ENCODE measurements at regions of chr1 and their contacts with region 1.

Region 1: GRCh38 chr1:41751804-41752513 is 166.8 kb downstream of the HIVEP3 start:
- DNase-seq: no peak
- ATAC-seq: peak; percentile 29
- H3K4me3 Mint-ChIP-seq: peak overlapping the region; percentile 68
- H3K27ac Mint-ChIP-seq: peak overlapping the region; percentile 89
- H3K4me1 Mint-ChIP-seq: peaks cover 65% of the 10 kb centered on the region
- H3K27me3 Mint-ChIP-seq: no peaks in the 10 kb centered on the region
- CTCF ChIP-seq: no peak

Region 2: GRCh38 chr1:41573785-41574713 is 177.9 kb before region 1 on chr1:
- CTCF ChIA-PET with region 1: interaction called, 3 read pairs
- POLR2A ChIA-PET with region 1: no interaction called
- intact Hi-C with region 1: loop called (anchors 2 kb)
- DNase-seq: peak; percentile 63
- ATAC-seq: peak; percentile 96
- H3K4me3 Mint-ChIP-seq: no peak overlapping the region
- H3K27ac Mint-ChIP-seq: no peak overlapping the region
- H3K4me1 Mint-ChIP-seq: peaks cover 23% of the 10 kb centered on the region
- H3K27me3 Mint-ChIP-seq: no peaks in the 10 kb centered on the region
- CTCF ChIP-seq: peak; percentile 70

Region 3: GRCh38 chr1:41662061-41662764 is 89.7 kb before region 1 on chr1:
- CTCF ChIA-PET with region 1: no interaction called
- POLR2A ChIA-PET with region 1: interaction called, 12 read pairs
- intact Hi-C with region 1: loop called (anchors 1 kb)
- DNase-seq: peak; percentile 73
- ATAC-seq: peak; percentile 78
- H3K4me3 Mint-ChIP-seq: peak overlapping the region; percentile 74
- H3K27ac Mint-ChIP-seq: no peak overlapping the region
- H3K4me1 Mint-ChIP-seq: peaks cover 78% of the 10 kb centered on the region
- H3K27me3 Mint-ChIP-seq: no peaks in the 10 kb centered on the region
- CTCF ChIP-seq: no peak

Region 4: DNA sequence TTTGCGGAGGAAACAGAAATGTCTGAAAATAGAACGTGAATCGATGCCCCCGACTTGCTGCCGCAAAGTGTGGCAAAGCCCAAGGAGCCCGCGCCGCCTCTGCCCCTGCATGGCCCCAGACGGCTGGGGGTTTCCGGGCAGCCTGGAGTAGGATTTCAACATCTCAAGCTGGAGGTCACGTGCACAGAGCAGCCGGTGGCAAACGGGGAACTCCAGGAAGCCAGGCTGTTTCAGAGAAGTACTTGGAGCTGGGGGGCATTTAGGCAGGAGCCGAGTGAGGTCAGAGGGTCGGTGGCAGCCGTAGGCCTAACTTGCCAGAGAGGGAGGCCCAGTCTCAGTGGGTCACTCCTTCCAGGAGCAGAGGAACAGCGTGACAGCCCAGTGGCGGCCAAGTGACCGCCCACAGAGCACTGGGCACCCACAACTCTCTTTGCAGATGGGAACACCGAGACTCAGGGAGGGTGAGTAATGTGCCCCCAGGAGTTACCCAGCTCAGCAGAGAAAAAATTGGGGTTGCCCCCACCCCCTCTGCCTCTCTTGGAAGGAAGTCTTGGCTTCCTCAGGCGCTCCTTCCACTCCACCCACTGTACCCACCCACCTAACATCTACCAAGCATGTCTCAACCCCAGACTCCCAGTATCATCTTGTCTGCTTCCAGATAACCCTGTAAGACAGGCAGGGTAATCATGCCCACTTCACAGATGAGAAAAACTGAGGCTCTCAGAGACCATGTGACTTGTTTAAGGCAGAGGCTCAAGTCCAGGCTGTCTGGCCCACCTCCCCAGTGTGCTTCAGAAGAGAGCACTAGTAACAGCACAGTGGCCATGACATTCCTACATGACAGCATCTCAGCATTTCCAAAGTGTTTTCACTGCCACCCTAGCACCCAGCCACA is 12.7 kb before region 1 on chr1:
- CTCF ChIA-PET with region 1: interaction called, 3 read pairs
- POLR2A ChIA-PET with region 1: interaction called, 33 read pairs
- intact Hi-C with region 1: loop called (anchors 1 kb)
- DNase-seq: peak; percentile 68
- ATAC-seq: peak; percentile 83
- H3K4me3 Mint-ChIP-seq: peak overlapping the region; percentile 77
- H3K27ac Mint-ChIP-seq: peak overlapping the region; percentile 90
- H3K4me1 Mint-ChIP-seq: peaks cover 84% of the 10 kb centered on the region
- H3K27me3 Mint-ChIP-seq: no peaks in the 10 kb centered on the region
- CTCF ChIP-seq: no peak

Region 5: DNA sequence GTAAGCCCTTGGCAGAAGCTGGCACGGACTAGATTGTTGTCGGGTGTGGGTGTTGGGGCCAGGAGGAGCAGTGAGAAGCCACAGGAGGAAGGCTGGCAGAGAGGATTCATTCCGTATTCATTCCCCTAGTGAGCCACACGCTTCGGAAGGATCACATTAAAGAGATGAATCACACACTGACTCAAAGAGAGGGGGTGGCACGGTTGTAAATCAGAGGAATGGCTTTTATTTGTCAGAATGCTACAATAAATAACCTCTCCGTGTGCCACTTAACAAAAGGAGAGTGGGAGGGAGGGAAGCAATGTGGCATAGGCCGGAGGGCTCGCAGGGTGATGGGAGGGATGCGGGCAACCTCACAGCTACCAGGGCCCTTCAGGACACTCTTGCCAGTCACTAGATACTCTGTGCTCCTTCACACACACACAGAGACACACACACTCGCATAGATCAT is 31.3 kb after region 1 on chr1:
- CTCF ChIA-PET with region 1: no interaction called
- POLR2A ChIA-PET with region 1: no interaction called
- intact Hi-C with region 1: no loop called
- DNase-seq: no peak
- ATAC-seq: no peak
- H3K4me3 Mint-ChIP-seq: no peak overlapping the region
- H3K27ac Mint-ChIP-seq: no peak overlapping the region
- H3K4me1 Mint-ChIP-seq: peaks cover 7% of the 10 kb centered on the region
- H3K27me3 Mint-ChIP-seq: no peaks in the 10 kb centered on the region
- CTCF ChIP-seq: no peak

Region 6: DNA sequence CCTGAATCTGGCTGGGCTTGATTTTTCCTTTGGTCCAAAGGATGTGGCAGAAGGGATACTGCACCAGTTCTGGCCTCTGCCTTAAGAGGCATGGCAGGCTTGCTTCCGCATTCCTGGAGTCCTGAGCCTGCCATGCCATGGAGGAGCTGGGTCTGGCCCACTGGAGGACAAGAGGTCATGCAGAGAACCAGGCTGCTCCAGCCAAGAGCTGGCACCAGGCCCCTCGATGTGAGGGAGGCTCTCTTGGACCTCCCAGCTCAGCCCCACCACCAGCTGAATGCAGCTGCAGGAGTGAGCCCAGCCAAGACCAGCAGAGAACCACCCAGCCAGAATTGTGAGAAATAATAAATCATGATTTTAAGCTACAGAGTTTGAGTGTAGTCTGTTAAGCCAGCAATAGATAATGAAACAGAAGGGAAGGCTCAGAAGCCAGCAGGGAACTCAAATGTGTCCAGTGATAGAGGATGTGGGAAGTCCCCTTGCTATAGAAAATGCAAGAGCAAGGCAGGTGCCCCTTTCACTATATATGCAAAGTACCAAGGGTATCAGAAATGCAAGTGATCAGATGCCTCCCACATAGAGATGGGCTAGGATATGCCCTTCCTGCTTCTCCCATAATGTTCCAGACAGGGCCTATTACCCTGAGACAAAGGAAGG is 48.4 kb after region 1 on chr1:
- CTCF ChIA-PET with region 1: no interaction called
- POLR2A ChIA-PET with region 1: interaction called, 10 read pairs
- intact Hi-C with region 1: no loop called
- DNase-seq: no peak
- ATAC-seq: peak; percentile 73
- H3K4me3 Mint-ChIP-seq: peak overlapping the region; percentile 39
- H3K27ac Mint-ChIP-seq: no peak overlapping the region
- H3K4me1 Mint-ChIP-seq: peaks cover 60% of the 10 kb centered on the region
- H3K27me3 Mint-ChIP-seq: no peaks in the 10 kb centered on the region
- CTCF ChIP-seq: no peak

Region 7: GRCh38 chr1:41868599-41868998 is 116.6 kb after region 1 on chr1:
- CTCF ChIA-PET with region 1: no interaction called
- POLR2A ChIA-PET with region 1: no interaction called
- intact Hi-C with region 1: loop called (anchors 2 kb)
- DNase-seq: no peak
- ATAC-seq: peak; percentile 74
- H3K4me3 Mint-ChIP-seq: no peak overlapping the region
- H3K27ac Mint-ChIP-seq: peak overlapping the region; percentile 4
- H3K4me1 Mint-ChIP-seq: peaks cover 23% of the 10 kb centered on the region
- H3K27me3 Mint-ChIP-seq: no peaks in the 10 kb centered on the region
- CTCF ChIP-seq: no peak

Region 8: DNA sequence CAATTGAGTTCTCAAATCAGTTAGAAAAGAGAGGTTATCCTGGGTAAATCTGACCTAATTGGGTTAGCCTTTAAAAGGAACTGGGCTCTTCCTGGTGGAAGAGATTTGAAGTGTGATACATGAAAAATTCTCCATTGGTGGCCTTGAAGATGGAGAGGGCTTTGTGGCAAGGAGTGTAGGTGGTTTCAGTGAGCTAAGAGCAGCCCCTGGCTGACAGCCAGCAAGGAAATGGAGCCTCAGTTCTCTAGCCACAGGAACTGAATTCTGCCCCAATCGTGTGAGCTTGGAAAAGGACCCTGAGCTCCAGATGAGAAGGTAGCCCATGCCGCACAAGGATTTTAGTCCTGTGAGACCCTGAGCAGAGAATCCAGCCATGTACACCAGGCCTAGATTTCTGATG is 1714.4 kb after region 1 on chr1:
- CTCF ChIA-PET with region 1: no interaction called
- POLR2A ChIA-PET with region 1: interaction called, 10 read pairs
- intact Hi-C with region 1: no loop called
- DNase-seq: no peak
- ATAC-seq: no peak
- H3K4me3 Mint-ChIP-seq: no peak overlapping the region
- H3K27ac Mint-ChIP-seq: no peak overlapping the region
- H3K4me1 Mint-ChIP-seq: peaks cover under 1% of the 10 kb centered on the region
- H3K27me3 Mint-ChIP-seq: no peaks in the 10 kb centered on the region
- CTCF ChIP-seq: no peak